SK-N-SH (cell line): ENCODE measurements at regions of chr11 and their contacts with region 1.

Region 1: GRCh38 chr11:72471005-72471898 is 36.9 kb upstream of the CLPB start:
- DNase-seq: peak; percentile 76
- H3K4me3 ChIP-seq: peak overlapping the region in 1 of 2 experiments; percentile 17; a peak in 1 of 4 replicates
- H3K27ac ChIP-seq: no peak overlapping the region
- H3K4me1 ChIP-seq: no peaks in the 10 kb centered on the region; a peak in 1 of 4 replicates
- H3K27me3 ChIP-seq: peaks cover 14% of the 10 kb centered on the region
- CTCF ChIP-seq: peak; percentile 81
- EP300 ChIP-seq: no peak
- RAD21 ChIP-seq: peak; percentile 87

Region 2: DNA sequence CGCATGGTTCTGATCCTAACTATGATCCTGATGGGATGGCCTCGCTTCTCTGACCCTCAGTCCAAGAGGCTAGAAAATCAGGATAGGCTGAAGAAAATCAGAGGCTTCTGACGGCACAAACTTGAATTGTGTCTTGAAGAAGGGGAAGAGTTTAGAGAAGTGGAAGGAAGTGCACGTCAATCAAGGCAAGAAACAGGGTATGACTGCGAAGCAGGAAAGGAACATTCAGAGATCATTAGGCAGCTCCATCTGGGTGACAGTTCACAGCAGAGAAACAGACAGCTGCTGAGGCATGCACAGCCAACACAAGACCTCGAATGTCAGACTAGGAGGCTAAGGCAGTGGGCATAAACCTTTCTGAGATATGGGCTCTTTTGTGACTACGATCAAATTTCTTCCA is 66.2 kb before region 1 on chr11:
- CTCF ChIA-PET with region 1: no interaction called
- POLR2A ChIA-PET with region 1: no interaction called
- DNase-seq: no peak
- H3K4me3 ChIP-seq: no peak overlapping the region
- H3K27ac ChIP-seq: no peak overlapping the region
- H3K4me1 ChIP-seq: peaks cover 0 to 19% of the 10 kb centered on the region in 2 experiments; a peak in 1 of 4 replicates
- H3K27me3 ChIP-seq: no peaks in the 10 kb centered on the region
- CTCF ChIP-seq: no peak
- EP300 ChIP-seq: no peak
- RAD21 ChIP-seq: no peak

Region 3: GRCh38 chr11:72460091-72460647 is 11.1 kb before region 1 on chr11:
- CTCF ChIA-PET with region 1: interaction called, 37 read pairs
- POLR2A ChIA-PET with region 1: interaction called, 3 read pairs
- DNase-seq: no peak
- H3K4me3 ChIP-seq: no peak overlapping the region
- H3K27ac ChIP-seq: no peak overlapping the region
- H3K4me1 ChIP-seq: no peaks in the 10 kb centered on the region
- H3K27me3 ChIP-seq: peaks cover 18% of the 10 kb centered on the region; the same call in 1 of the 2 replicates
- CTCF ChIP-seq: no peak
- EP300 ChIP-seq: no peak
- RAD21 ChIP-seq: no peak

Region 4: GRCh38 chr11:72537051-72537450 is 65.8 kb after region 1 on chr11:
- CTCF ChIA-PET with region 1: interaction called, 11 read pairs
- POLR2A ChIA-PET with region 1: no interaction called
- DNase-seq: no peak
- H3K4me3 ChIP-seq: no peak overlapping the region
- H3K27ac ChIP-seq: no peak overlapping the region
- H3K4me1 ChIP-seq: peaks cover 0 to 2% of the 10 kb centered on the region in 2 experiments; a peak in 2 of 4 replicates
- H3K27me3 ChIP-seq: peaks cover 42% of the 10 kb centered on the region; the same call in 1 of the 2 replicates
- CTCF ChIP-seq: no peak
- EP300 ChIP-seq: no peak
- RAD21 ChIP-seq: no peak

Region 5: GRCh38 chr11:72561856-72562255 is 90.6 kb after region 1 on chr11:
- CTCF ChIA-PET with region 1: interaction called, 27 read pairs
- POLR2A ChIA-PET with region 1: no interaction called
- DNase-seq: no peak
- H3K4me3 ChIP-seq: no peak overlapping the region
- H3K27ac ChIP-seq: no peak overlapping the region
- H3K4me1 ChIP-seq: no peaks in the 10 kb centered on the region; a peak in 1 of 4 replicates
- H3K27me3 ChIP-seq: peaks cover 9% of the 10 kb centered on the region; the same call in 1 of the 2 replicates
- CTCF ChIP-seq: no peak
- EP300 ChIP-seq: no peak
- RAD21 ChIP-seq: no peak

Region 6: GRCh38 chr11:72598906-72599305 is 127.7 kb after region 1 on chr11:
- CTCF ChIA-PET with region 1: interaction called, 11 read pairs
- POLR2A ChIA-PET with region 1: no interaction called
- DNase-seq: peak; percentile 83
- H3K4me3 ChIP-seq: no peak overlapping the region
- H3K27ac ChIP-seq: no peak overlapping the region
- H3K4me1 ChIP-seq: peaks cover 0 to 20% of the 10 kb centered on the region in 2 experiments; a peak in 1 of 4 replicates
- H3K27me3 ChIP-seq: peaks cover 11% of the 10 kb centered on the region; the same call in 1 of the 2 replicates
- CTCF ChIP-seq: peak; percentile 46
- EP300 ChIP-seq: no peak
- RAD21 ChIP-seq: peak; percentile 74